HepG2 (cell line): ENCODE measurements at regions of chr20 and their contacts with region 1.

Region 1: GRCh38 chr20:19583532-19584175 is 174.4 kb upstream of the RIN2 start:
- DNase-seq: peak; percentile 51
- ATAC-seq: peak; percentile 89
- H3K4me3 ChIP-seq: no peak overlapping the region
- H3K27ac ChIP-seq: no peak overlapping the region
- H3K4me1 ChIP-seq: no peaks in the 10 kb centered on the region
- H3K27me3 ChIP-seq: peaks cover 4 to 53% of the 10 kb centered on the region in 2 experiments; a peak in 4 of 5 replicates
- CTCF ChIP-seq: peak; percentile 90
- EP300 ChIP-seq: no peak
- POLR2A ChIP-seq: no peak
- RAD21 ChIP-seq: peak; percentile 76

Region 2: GRCh38 chr20:19205977-19206396 is 377.7 kb before region 1 on chr20:
- CTCF ChIA-PET with region 1: interaction called, 8 read pairs
- POLR2A ChIA-PET with region 1: no interaction called
- in situ Hi-C with region 1: loop called (anchors 5 kb)
- intact Hi-C with region 1: loop called (anchors 1 kb)
- DNase-seq: peak; percentile 50
- ATAC-seq: peak; percentile 96
- H3K4me3 ChIP-seq: no peak overlapping the region
- H3K27ac ChIP-seq: no peak overlapping the region
- H3K4me1 ChIP-seq: no peaks in the 10 kb centered on the region
- H3K27me3 ChIP-seq: peaks cover under 1 to 20% of the 10 kb centered on the region in 2 experiments; a peak in 4 of 5 replicates
- CTCF ChIP-seq: peak; percentile 95
- EP300 ChIP-seq: no peak
- POLR2A ChIP-seq: no peak
- RAD21 ChIP-seq: peak; percentile 47

Region 3: GRCh38 chr20:19683188-19683587 is 99.5 kb after region 1 on chr20:
- CTCF ChIA-PET with region 1: no interaction called
- POLR2A ChIA-PET with region 1: no interaction called
- in situ Hi-C with region 1: no loop called
- intact Hi-C with region 1: no loop called
- DNase-seq: no peak
- ATAC-seq: no peak
- H3K4me3 ChIP-seq: no peak overlapping the region
- H3K27ac ChIP-seq: no peak overlapping the region
- H3K4me1 ChIP-seq: no peaks in the 10 kb centered on the region
- H3K27me3 ChIP-seq: peaks cover 0 to 3% of the 10 kb centered on the region in 2 experiments; a peak in 1 of 5 replicates
- CTCF ChIP-seq: no peak
- EP300 ChIP-seq: no peak
- POLR2A ChIP-seq: no peak
- RAD21 ChIP-seq: no peak